Adrenal gland (tissue), 19 donors: ENCODE measurements at regions of chr11 and their contacts with region 1.

Region 1: GRCh38 chr11:78325274-78325781 is 92.3 kb downstream of the GAB2 start:
- DNase-seq: no peak
- H3K4me3 ChIP-seq: no peak overlapping the region
- H3K27ac ChIP-seq: no peak overlapping the region
- H3K4me1 ChIP-seq: peaks cover 0 to 8% of the 10 kb centered on the region in 2 donors
- H3K27me3 ChIP-seq: no peaks in the 10 kb centered on the region
- CTCF ChIP-seq: no peak
- POLR2A ChIP-seq: no peak

Region 2: GRCh38 chr11:78256962-78257361 is 68.4 kb before region 1 on chr11:
- intact Hi-C with region 1: loop called in 1 of 2 experiments (anchors 10 kb)
- DNase-seq: peak; percentile 65 to 95 (median 89)
- H3K4me3 ChIP-seq: no peak overlapping the region
- H3K27ac ChIP-seq: peak overlapping the region in 3 of 5 donors; percentile 15 to 79 (median 71)
- H3K4me1 ChIP-seq: peaks cover 0 to 27% of the 10 kb centered on the region in 2 donors
- H3K27me3 ChIP-seq: no peaks in the 10 kb centered on the region
- CTCF ChIP-seq: no peak
- POLR2A ChIP-seq: no peak

Region 3: GRCh38 chr11:78406538-78407196 is 81.3 kb after region 1 on chr11:
- intact Hi-C with region 1: loop called in 1 of 2 experiments (anchors 10 kb)
- DNase-seq: no peak
- H3K4me3 ChIP-seq: no peak overlapping the region
- H3K27ac ChIP-seq: no peak overlapping the region
- H3K4me1 ChIP-seq: peaks cover 0 to 18% of the 10 kb centered on the region in 2 donors
- H3K27me3 ChIP-seq: no peaks in the 10 kb centered on the region
- CTCF ChIP-seq: no peak
- POLR2A ChIP-seq: no peak